ENCODE measurements at regions of chr7 and their contacts with region 1.

Region 1: DNA sequence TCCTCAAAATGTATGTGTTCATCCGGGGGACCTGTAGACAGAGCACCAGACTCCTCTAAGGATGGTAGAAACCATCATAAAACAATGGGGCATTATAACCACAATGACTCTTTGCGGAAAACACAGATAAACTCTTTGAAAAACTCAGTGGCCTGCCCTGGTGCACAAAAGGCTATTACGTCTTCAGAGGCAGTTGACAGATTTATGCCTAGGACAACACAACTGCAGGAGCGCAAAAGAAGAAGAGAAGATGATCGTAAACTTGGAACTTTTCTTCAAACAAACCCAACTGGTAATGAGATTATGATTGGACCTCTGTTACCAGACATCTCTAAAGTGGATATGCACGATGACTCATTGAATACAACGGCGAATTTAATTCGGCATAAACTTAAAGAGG is 6.0 kb downstream of the RBM48 start:
- DNase-seq: no peak
- H3K4me3 ChIP-seq: peak overlapping the region in 14 of 59 donors; percentile 1 to 27 (median 6)
- H3K27ac ChIP-seq: peak overlapping the region in 27 of 59 donors; percentile 4 to 66 (median 25)
- H3K27me3 ChIP-seq: no peaks in the 10 kb centered on the region
- CTCF ChIP-seq: no peak

Region 2: GRCh38 chr7:92366730-92367129 is 167.8 kb before region 1 on chr7:
- intact Hi-C with region 1: no loop called
- DNase-seq: no peak
- H3K4me3 ChIP-seq: no peak overlapping the region
- H3K27ac ChIP-seq: peak overlapping the region in 52 of 59 donors; percentile 85 to 100 (median 95)
- H3K27me3 ChIP-seq: no peaks in the 10 kb centered on the region
- CTCF ChIP-seq: no peak

Region 3: DNA sequence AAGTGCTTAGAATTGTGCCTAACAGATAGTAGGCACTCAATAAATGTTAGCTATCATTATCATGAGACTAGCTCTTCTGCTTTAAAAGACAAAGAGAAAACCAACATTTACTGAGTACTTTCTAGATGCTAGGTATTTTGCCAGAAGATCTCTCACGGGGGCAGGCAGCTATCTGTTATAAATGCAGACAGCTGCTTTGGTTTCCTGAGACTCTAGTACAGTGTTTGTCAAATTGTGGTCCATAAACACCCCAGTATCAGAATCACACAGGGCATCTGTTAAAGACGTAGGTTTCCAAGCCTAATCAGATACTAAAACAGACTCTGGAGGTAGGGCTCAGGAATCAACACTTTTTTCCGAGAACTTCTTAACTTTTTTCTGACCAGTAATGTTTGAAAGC is 41.7 kb after region 1 on chr7:
- intact Hi-C with region 1: no loop called
- DNase-seq: no peak
- H3K4me3 ChIP-seq: no peak overlapping the region
- H3K27ac ChIP-seq: no peak overlapping the region
- H3K27me3 ChIP-seq: no peaks in the 10 kb centered on the region
- CTCF ChIP-seq: no peak

Region 4: DNA sequence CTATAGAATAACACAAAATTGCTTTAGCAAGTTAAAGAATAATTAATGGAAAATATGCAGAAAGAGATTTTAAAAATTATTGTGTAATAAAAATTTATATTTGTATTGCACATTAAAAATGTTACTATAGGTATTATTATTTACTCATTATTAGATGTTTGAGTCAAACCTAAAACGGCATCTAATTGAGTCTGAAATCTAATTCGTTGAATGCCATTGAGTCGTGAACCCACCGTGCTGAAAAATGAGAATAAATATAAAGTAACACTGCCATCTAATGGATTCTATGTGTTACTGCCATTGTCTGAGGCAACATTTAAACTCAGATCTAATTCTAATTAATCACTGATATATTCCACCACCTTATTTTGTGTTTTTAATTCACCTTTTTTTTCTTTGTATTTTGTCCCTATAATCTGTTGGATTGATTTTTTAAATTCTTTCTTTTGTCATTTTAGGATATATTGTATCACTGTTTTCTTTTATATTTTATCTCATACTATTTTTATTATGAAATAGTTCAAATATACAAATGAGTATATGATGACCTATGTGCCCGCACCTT is 521.1 kb after region 1 on chr7:
- intact Hi-C with region 1: loop called in 1 of 2 experiments (anchors 10 kb)
- DNase-seq: no peak
- H3K4me3 ChIP-seq: peak overlapping the region in 1 of 59 donors; percentile 5
- H3K27ac ChIP-seq: no peak overlapping the region
- H3K27me3 ChIP-seq: peaks cover 0 to 4% (median 0%) of the 10 kb centered on the region in 45 donors
- CTCF ChIP-seq: peak; percentile 65 to 96 (median 82)